Panc1 (cell line): ENCODE measurements at regions of chr1 and their contacts with region 1.

Region 1: GRCh38 chr1:96966536-96967138 is 245.1 kb downstream of the PTBP2 start:
- DNase-seq: peak; percentile 62
- ATAC-seq: peak; percentile 85
- H3K4me3 ChIP-seq: peak overlapping the region; percentile 15 to 31
- H3K27ac ChIP-seq: no peak overlapping the region
- H3K4me1 ChIP-seq: no peaks in the 10 kb centered on the region
- H3K27me3 ChIP-seq: no peaks in the 10 kb centered on the region
- CTCF ChIP-seq: peak; percentile 86

Region 2: GRCh38 chr1:97119260-97120158 is 152.9 kb after region 1 on chr1:
- CTCF ChIA-PET with region 1: no interaction called
- POLR2A ChIA-PET with region 1: no interaction called
- in situ Hi-C with region 1: no loop called
- intact Hi-C with region 1: no loop called
- DNase-seq: no peak
- ATAC-seq: no peak
- H3K4me3 ChIP-seq: no peak overlapping the region
- H3K27ac ChIP-seq: no peak overlapping the region
- H3K4me1 ChIP-seq: no peaks in the 10 kb centered on the region
- H3K27me3 ChIP-seq: no peaks in the 10 kb centered on the region
- CTCF ChIP-seq: no peak

Region 3: GRCh38 chr1:97186404-97186803 is 219.8 kb after region 1 on chr1:
- CTCF ChIA-PET with region 1: no interaction called
- POLR2A ChIA-PET with region 1: no interaction called
- in situ Hi-C with region 1: no loop called
- intact Hi-C with region 1: loop called (anchors 10 kb)
- DNase-seq: no peak
- ATAC-seq: no peak
- H3K4me3 ChIP-seq: no peak overlapping the region
- H3K27ac ChIP-seq: no peak overlapping the region
- H3K4me1 ChIP-seq: no peaks in the 10 kb centered on the region
- H3K27me3 ChIP-seq: no peaks in the 10 kb centered on the region
- CTCF ChIP-seq: no peak

Region 4: DNA sequence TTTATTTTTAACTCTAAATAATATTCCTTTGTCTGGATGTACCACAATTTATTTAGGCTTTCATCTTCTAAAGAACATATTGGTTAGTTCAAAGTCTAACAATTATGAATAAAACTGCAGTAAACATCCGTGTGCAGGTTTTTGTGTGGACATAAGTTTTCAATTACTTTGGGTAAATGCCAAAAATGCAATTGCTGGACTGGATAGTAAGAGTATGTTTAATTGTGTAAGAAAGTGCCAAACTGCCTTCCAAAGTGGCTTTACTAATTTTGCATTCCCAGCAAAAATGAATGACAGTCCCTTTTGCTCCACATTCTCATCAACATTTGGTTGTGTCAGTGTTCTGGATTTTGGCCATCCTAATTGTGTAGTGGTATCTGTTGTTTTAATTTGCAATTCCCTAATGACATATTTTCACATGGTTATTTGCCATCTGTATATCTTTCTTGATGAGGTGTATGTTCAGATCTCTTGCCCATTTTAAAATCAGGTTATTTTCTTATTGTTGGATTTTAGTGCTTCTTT is 840.4 kb after region 1 on chr1:
- CTCF ChIA-PET with region 1: no interaction called
- POLR2A ChIA-PET with region 1: no interaction called
- in situ Hi-C with region 1: no loop called
- intact Hi-C with region 1: loop called (anchors 10 kb)
- DNase-seq: no peak
- ATAC-seq: no peak
- H3K4me3 ChIP-seq: no peak overlapping the region
- H3K27ac ChIP-seq: no peak overlapping the region
- H3K4me1 ChIP-seq: no peaks in the 10 kb centered on the region
- H3K27me3 ChIP-seq: no peaks in the 10 kb centered on the region
- CTCF ChIP-seq: no peak

Region 5: GRCh38 chr1:98053471-98054366 is 1087.1 kb after region 1 on chr1:
- CTCF ChIA-PET with region 1: no interaction called
- POLR2A ChIA-PET with region 1: no interaction called
- in situ Hi-C with region 1: no loop called
- intact Hi-C with region 1: loop called (anchors 10 kb)
- DNase-seq: no peak
- ATAC-seq: peak; percentile 99
- H3K4me3 ChIP-seq: peak overlapping the region; percentile 41 to 68
- H3K27ac ChIP-seq: peak overlapping the region; percentile 65
- H3K4me1 ChIP-seq: no peaks in the 10 kb centered on the region
- H3K27me3 ChIP-seq: no peaks in the 10 kb centered on the region
- CTCF ChIP-seq: peak; percentile 93